Transverse colon (tissue), 4 donors: ENCODE measurements at regions of chr2 and their contacts with region 1.

Region 1: DNA sequence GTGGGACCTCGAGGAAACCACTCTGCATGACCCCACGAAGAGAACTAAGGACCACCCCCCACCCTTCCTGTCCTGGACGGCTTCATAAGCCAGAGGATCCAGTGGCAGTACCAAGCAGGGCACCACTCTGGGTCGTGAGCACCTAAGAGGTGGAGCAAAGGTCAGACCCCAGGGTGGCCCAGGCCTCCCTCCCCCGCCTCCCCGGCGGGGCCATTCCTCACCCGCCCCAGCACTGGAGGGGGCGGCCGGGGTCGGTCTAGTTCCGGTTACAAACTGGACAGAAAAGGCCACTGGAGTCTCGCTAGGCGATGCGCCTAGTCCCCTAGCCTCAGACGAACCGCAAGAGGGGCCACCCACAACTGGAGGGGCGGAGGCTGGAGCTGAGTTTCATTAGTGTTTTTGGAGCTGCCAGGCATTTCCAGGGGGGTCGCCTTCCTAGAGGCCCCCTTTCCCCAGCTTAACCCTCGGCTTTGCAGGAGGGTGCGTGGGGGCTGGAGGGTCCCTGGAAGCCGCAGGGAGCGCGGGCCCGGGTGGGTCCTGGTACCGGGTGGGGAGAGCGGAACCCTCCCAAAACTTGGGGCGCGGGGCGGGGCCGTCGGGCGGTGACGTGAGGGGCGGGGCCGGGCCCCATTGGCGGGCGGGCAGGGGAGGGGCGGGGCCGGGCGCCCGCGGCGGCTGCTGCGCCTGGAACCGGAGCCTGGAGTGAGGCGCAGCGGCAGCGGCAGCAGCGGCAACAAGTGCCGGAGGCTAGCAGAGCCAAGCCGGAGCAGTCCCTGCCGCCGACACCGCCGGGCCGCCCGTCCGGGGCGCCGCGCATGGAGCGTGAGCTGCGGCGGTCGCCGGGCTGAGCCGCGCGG is at the start of gene B3GNT2:
- DNase-seq: peak; percentile 87
- H3K4me3 ChIP-seq: peak within 1 kb of the TSS; percentile 62 to 94 (median 78)
- H3K27ac ChIP-seq: peak within 1 kb of the TSS; percentile 91 to 98 (median 96)
- H3K4me1 ChIP-seq: peaks cover 6 to 40% (median 22%) of the 10 kb centered on the region in 4 donors
- H3K27me3 ChIP-seq: no peaks in the 10 kb centered on the region
- CTCF ChIP-seq: no peak
- EP300 ChIP-seq: no peak
- POLR2A ChIP-seq: peak; percentile 28
- total RNA-seq, gene B3GNT2: 28.1 to 41.6 (median 38.4) TPM

Region 2: DNA sequence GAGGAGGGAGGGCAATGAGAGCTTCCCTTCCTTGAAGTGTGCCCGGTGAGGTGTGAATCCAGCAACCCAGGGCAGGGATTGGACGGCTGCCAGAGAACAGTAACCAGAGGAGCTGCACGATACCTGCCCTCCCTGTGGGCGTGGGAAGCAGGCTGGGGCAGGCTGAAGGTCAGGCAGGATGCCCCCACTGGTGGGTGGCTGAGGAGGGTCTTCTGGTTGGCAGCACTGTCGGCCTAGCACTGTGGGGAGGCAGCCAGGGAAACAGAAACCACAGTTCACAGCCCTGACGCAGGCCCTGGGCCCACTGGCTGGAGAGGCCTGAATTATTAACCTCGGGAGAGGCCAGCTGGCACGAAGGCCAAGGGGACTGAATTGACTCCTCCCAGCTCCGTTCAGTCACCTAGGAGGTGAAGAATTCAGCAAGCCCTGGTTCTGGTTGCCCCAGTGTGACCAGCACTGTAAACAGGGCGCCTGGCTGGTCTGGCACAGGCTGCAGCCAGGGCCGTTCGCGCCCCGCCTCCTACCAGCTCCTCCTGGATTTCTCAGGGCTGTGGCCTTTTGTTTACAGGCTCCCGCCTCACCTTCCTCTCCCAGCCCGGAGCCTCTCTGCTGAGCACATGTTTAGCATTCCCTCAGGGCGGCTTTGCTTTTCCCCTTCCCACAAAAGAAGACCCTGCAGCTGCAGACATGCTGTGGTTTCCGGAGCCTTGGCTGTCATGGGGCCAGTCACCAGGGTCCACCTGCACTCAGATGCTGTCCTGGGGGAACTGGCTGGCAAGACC is 98.0 kb after region 1 on chr2:
- in situ Hi-C with region 1: no loop called
- intact Hi-C with region 1: loop called (anchors 5 kb)
- DNase-seq: peak; percentile 92
- H3K4me3 ChIP-seq: peak overlapping the region in 1 of 4 donors; percentile 25
- H3K27ac ChIP-seq: peak overlapping the region; percentile 81 to 88 (median 84)
- H3K4me1 ChIP-seq: peaks cover 21 to 53% (median 39%) of the 10 kb centered on the region in 4 donors
- H3K27me3 ChIP-seq: no peaks in the 10 kb centered on the region
- CTCF ChIP-seq: no peak
- EP300 ChIP-seq: no peak
- POLR2A ChIP-seq: no peak

Region 3: GRCh38 chr2:62511636-62512035 is 316.0 kb after region 1 on chr2:
- in situ Hi-C with region 1: no loop called
- intact Hi-C with region 1: no loop called
- DNase-seq: no peak
- H3K4me3 ChIP-seq: no peak overlapping the region
- H3K27ac ChIP-seq: no peak overlapping the region
- H3K4me1 ChIP-seq: peaks cover 0 to 4% (median 2%) of the 10 kb centered on the region in 4 donors
- H3K27me3 ChIP-seq: no peaks in the 10 kb centered on the region
- CTCF ChIP-seq: no peak
- EP300 ChIP-seq: no peak
- POLR2A ChIP-seq: no peak